ENCODE measurements at regions of chr5 and their contacts with region 1.

Region 1: GRCh38 chr5:134864707-134865106 is 9.5 kb upstream of the TXNDC15 start:
- DNase-seq: no peak
- H3K4me3 ChIP-seq: no peak overlapping the region
- H3K27me3 ChIP-seq: no peaks in the 10 kb centered on the region
- CTCF ChIP-seq: no peak

Region 2: DNA sequence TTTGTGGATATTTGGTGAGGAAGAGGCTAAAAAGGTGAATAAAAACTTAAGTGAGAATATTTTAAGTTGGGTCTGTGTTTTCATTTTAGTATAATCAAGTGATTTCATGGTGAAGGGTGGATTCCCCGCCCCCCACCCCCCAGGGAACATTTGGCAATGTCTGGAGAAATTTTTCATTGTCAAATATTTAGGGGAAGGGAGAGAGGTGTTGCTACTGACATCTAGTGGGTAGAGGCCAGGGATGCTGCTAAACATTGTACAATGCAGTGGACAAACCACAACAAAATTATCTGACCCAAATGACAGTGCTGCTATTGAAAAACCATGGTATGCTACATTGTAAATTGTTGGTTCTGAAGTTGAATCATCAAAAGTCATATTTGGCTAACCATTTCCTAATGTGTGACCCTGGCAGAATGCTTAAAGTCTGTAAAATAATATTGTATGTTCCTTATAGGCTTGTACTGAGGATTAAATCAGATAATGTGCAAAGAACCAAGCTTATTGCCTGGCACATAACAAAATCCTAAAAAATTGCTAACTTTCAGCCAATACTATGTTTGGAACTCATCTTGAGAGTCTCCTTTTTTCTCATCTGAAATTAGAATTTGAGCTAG is 13.3 kb before region 1 on chr5:
- CTCF ChIA-PET with region 1: interaction called, 10 read pairs
- POLR2A ChIA-PET with region 1: no interaction called
- DNase-seq: no peak
- H3K4me3 ChIP-seq: no peak overlapping the region
- H3K27me3 ChIP-seq: no peaks in the 10 kb centered on the region
- CTCF ChIP-seq: peak; percentile 73

Region 3: DNA sequence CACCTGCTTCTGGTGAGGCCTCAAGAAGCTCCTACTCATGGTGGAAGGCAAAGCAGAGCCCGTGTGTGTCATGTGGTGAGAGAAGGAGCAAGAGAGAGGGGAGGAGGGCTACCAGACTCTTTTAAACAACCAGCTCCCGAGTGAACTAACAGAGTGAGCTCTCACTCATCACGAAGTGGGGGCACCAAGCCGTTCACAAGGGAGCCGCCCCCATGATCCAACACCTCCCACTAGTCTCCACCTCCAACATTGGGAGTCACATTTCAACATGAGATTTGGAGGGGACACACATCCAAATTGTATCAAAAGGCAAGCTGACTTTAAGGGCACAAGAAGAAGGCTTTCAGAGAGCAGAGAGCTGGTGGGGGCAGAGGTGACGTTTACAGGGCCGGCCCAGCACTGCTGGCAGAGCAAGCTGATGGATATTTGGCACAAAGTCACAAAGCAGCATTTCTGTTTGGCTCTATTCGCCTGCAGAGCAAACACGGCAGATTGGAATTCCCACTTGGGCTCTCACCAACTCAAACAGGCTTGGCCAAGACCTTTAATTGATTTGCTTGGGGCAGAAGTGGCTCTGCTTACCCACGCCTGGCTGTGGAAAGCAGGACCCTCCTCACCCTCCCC is 149.4 kb after region 1 on chr5:
- CTCF ChIA-PET with region 1: no interaction called
- POLR2A ChIA-PET with region 1: no interaction called
- DNase-seq: no peak
- H3K4me3 ChIP-seq: no peak overlapping the region
- H3K27me3 ChIP-seq: no peaks in the 10 kb centered on the region
- CTCF ChIP-seq: no peak

Measured in BJ (cell line).